Sciatic nerve (tissue), 2 donors: ENCODE measurements at regions of chr2 and their contacts with region 1.

Region 1: DNA sequence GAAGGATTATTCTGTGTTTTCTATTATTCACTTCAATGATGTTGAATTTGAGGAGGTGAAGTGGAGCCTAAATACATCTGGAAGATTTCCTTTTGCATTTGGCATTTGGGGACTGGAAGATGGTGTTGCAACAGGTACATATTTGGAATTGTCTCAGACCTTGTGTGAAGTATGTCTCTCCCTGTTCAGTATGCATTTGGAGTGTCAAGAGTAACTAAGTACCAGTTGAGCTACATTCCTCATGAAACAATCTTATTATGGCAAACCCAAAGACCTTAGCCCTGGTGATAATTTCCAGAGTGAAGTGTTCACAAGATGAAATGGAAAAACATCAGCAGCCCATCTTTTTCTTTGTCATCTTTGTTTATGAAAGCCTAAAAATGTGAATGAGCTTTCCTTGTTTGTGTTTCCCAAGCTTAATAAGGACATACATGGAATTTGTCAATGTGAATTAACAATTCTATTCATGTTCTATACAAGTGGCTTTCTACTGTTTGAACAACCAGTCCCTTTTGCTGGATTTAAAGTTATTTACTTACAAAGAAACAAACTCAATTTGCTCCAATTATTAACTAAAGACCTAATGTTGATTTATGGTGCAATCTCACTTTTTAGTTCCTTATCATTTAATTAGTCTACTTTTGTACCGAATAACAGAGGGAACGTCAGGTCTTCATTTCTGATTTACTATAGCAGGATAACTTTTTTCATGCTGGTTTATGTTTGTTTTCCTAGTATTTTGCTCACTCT is 42.1 kb upstream of the PPP1R1C start:
- DNase-seq: no peak
- ATAC-seq: no peak

Region 2: GRCh38 chr2:181566334-181567032 is 377.1 kb before region 1 on chr2:
- intact Hi-C with region 1: loop called (anchors 5 kb)
- DNase-seq: no peak
- ATAC-seq: no peak